Natural killer cell (primary cell): ENCODE measurements at regions of chr17 and their contacts with region 1.

Region 1: DNA sequence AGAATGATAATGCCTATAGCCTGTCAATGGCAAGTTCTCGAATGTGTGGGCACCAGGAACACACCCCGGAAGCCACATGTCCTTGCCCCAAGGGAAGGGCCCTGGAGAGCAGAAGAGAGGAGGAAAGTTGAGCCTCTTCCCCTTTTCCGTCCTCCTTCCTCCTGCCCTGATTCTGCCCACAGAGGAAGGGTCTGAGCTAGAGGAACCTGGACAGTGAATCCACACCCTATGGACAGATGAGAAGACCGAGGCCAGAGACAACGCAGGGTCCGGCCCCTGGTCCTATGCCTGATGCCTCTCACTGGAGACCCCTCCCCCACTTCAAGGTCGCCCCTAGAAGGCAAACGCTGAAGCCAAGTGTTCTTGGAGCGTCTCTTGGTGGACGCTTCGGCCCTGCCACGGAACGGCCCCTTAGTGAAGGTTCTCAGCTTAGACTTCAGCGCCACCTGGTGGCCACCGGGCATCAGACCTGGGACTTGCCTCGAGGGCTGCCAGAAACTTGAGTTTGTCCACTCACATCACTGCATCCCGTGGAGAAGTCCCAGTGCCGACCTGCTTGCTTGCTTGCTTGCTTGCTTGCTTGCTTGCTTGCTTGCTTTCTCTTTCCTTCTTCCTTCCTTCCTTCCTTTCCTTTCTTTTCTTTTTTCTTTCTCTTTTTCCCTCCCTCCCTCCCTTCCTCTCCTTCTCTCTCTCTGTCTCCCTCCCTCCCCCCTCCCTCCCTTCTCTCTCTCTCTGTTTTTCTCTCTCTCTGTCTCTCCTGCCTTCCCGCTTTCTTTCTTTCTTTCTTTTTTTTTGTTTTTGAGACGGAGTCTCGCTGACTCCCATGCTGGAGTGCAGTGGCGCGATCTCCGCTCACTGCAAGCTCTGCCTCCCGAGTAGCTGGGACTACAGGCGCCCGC is 20.6 kb upstream of the SPNS3 start:
- DNase-seq: peak; percentile 90 to 94
- ATAC-seq: peak; percentile 94 to 98 (median 97)
- H3K4me3 ChIP-seq: no peak overlapping the region
- H3K4me3 Mint-ChIP-seq: peak overlapping the region; percentile 47
- H3K27ac ChIP-seq: no peak overlapping the region
- H3K27ac Mint-ChIP-seq: peak overlapping the region in 1 of 2 donors; percentile 63
- H3K4me1 ChIP-seq: peaks cover 8% of the 10 kb centered on the region
- H3K4me1 Mint-ChIP-seq: peaks cover 4 to 7% of the 10 kb centered on the region in 2 donors
- H3K27me3 ChIP-seq: no peaks in the 10 kb centered on the region
- H3K27me3 Mint-ChIP-seq: peaks cover 0 to 5% of the 10 kb centered on the region in 2 donors
- CTCF ChIP-seq: peak; percentile 84

Region 2: GRCh38 chr17:4199818-4200402 is 213.3 kb before region 1 on chr17:
- intact Hi-C with region 1: loop called (anchors 1 kb)
- DNase-seq: peak in 1 of 2 donors; percentile 75
- ATAC-seq: peak; percentile 65 to 73 (median 67)
- H3K4me3 ChIP-seq: no peak overlapping the region
- H3K4me3 Mint-ChIP-seq: no peak overlapping the region
- H3K27ac ChIP-seq: no peak overlapping the region
- H3K27ac Mint-ChIP-seq: no peak overlapping the region
- H3K4me1 ChIP-seq: no peaks in the 10 kb centered on the region
- H3K4me1 Mint-ChIP-seq: peaks cover 0 to 4% of the 10 kb centered on the region in 2 donors
- H3K27me3 ChIP-seq: no peaks in the 10 kb centered on the region
- H3K27me3 Mint-ChIP-seq: no peaks in the 10 kb centered on the region
- CTCF ChIP-seq: peak; percentile 80

Region 3: GRCh38 chr17:4215882-4216570 is 197.2 kb before region 1 on chr17:
- intact Hi-C with region 1: loop called (anchors 1 kb)
- DNase-seq: no peak
- ATAC-seq: no peak
- H3K4me3 ChIP-seq: no peak overlapping the region
- H3K4me3 Mint-ChIP-seq: no peak overlapping the region
- H3K27ac ChIP-seq: no peak overlapping the region
- H3K27ac Mint-ChIP-seq: peak overlapping the region; percentile 22 to 75
- H3K4me1 ChIP-seq: peaks cover 2% of the 10 kb centered on the region
- H3K4me1 Mint-ChIP-seq: peaks cover 7 to 8% of the 10 kb centered on the region in 2 donors
- H3K27me3 ChIP-seq: no peaks in the 10 kb centered on the region
- H3K27me3 Mint-ChIP-seq: no peaks in the 10 kb centered on the region
- CTCF ChIP-seq: no peak

Region 4: DNA sequence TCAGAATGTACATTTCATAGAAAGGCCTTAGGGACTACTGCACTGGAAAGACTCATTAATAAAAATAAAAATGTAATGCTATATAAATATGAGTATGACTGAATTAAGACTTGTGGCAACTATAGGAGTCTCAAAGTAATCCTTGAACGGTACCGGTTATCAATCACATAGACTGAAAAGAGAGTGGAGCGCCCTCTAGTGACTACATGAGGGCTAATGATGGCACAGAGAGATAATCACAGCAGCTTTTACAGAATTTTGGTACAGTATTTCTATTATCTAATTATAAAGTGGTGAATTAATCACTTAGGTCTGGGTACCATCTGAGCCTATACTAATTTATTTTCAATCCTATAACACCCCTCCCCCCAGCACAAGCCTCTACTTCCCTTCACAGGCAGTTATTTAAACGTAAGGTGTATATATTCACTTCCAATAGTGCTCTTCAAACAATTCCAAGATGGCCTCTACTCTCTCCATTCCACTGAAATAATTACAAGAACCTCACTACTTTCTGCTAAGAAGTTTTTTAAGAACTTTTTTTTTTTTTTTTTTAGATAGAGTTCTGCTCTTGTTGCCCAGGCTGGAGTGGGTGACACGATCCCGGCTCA is 108.7 kb before region 1 on chr17:
- intact Hi-C with region 1: loop called (anchors 1 kb)
- DNase-seq: peak in 1 of 2 donors; percentile 83
- ATAC-seq: peak; percentile 75 to 82 (median 79)
- H3K4me3 ChIP-seq: no peak overlapping the region
- H3K4me3 Mint-ChIP-seq: no peak overlapping the region
- H3K27ac ChIP-seq: no peak overlapping the region
- H3K27ac Mint-ChIP-seq: no peak overlapping the region
- H3K4me1 ChIP-seq: peaks cover 4% of the 10 kb centered on the region
- H3K4me1 Mint-ChIP-seq: peaks cover 17 to 23% of the 10 kb centered on the region in 2 donors
- H3K27me3 ChIP-seq: no peaks in the 10 kb centered on the region
- H3K27me3 Mint-ChIP-seq: no peaks in the 10 kb centered on the region
- CTCF ChIP-seq: peak; percentile 89